Activated naive CD4-positive, alpha-beta T cell treated with anti-CD3 and anti-CD28 coated beads for 36 hours (primary cell): ENCODE measurements at regions of chr1 and their contacts with region 1.

Region 1: DNA sequence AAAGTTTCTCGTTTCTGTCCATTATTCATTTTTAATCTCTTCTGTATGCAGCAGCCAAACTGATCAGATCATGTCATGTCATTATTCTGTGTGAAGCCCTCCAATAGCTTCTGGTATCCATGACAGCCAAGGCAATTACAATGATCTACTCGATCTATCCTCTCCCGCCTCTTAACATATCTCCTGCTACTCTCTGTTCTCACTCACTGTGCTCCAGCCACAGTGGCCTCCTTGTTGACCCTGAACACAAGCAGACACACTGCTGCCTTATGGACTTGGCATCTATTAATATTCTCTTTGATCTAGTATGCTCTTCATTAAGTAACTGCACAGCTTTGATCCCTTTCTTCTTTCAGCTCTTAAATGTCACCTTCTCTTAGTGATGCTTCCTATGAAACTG is 59.5 kb downstream of the TPR start:
- DNase-seq: no peak
- H3K4me3 Mint-ChIP-seq: no peak overlapping the region
- H3K27ac Mint-ChIP-seq: peak overlapping the region; percentile 47
- H3K4me1 Mint-ChIP-seq: peaks cover 24% of the 10 kb centered on the region
- H3K27me3 Mint-ChIP-seq: no peaks in the 10 kb centered on the region

Region 2: DNA sequence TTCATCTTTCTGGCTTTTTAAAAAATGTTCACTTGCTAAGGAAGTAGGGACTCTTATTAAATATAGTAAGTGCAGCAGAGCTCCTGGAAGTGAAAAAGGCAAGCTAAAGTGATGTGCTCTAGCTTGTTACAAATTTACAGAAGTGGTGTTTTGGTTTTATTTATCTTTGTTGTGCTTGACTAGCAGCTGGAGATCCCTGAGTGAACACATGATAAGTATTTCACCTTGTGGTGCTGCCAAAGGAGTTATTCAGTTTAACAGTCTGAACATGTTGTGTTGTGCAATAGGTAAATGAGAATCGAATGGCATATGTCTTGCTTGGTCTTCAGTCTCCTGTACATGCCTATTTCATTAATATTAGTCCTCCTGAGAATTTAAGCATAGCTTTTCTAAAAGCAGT is 256.3 kb before region 1 on chr1:
- CTCF ChIA-PET with region 1: no interaction called
- intact Hi-C with region 1: no loop called
- DNase-seq: no peak
- H3K4me3 Mint-ChIP-seq: no peak overlapping the region
- H3K27ac Mint-ChIP-seq: no peak overlapping the region
- H3K4me1 Mint-ChIP-seq: peaks cover 4% of the 10 kb centered on the region
- H3K27me3 Mint-ChIP-seq: peaks cover 3% of the 10 kb centered on the region

Region 3: GRCh38 chr1:186330758-186331157 is 15.2 kb after region 1 on chr1:
- CTCF ChIA-PET with region 1: interaction called, 19 read pairs
- intact Hi-C with region 1: no loop called
- DNase-seq: no peak
- H3K4me3 Mint-ChIP-seq: no peak overlapping the region
- H3K27ac Mint-ChIP-seq: no peak overlapping the region
- H3K4me1 Mint-ChIP-seq: peaks cover 7% of the 10 kb centered on the region
- H3K27me3 Mint-ChIP-seq: no peaks in the 10 kb centered on the region